ENCODE measurements at regions of chr1 and their contacts with region 1.

Region 1: DNA sequence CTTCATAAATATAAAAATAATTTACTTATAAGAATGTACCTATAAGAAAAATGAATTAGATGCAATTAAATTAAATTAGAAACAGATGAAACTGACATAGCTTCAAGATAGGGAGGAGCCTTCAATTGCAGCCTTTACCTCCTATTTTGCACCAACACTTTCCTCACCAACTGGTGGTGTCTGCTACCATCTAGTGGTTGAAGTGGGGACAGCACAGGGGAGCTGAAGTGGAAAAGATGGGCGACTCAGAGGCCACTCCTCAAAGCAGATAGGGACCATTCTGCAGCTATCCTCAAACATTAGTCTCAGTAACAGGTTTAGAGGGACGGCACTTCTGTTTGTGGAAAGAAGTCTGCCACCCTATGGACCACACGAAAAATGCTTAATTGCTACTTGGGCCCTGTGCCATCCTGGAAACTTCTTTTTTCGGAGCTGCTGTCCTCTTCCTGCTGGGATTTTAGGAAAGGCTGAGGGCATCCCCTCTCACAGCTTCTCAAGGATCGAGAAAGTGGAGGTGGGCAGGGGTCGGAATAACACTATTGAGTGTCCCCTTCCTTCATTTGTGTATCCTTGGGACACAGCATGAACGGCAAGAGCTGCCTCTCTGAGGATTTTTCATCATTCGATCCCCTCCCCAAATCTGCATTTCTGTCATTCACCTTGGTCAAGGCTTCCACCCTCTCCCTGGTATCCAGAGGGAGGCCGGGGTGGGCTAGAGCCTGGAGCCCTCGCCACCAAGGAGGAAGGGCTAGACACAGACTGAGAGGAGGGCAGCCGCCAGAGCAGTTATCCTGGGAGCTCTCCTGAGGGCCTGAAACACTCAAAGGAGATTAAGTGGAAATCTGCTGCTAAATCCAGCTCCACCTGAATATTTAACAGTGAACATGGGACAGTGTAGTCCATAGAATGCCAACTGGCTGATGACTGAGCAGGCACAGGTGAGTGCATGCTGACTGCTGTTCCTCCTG is 9.6 kb downstream of the PROK1 start:
- DNase-seq: peak; percentile 23
- H3K4me3 ChIP-seq: no peak overlapping the region
- H3K27me3 ChIP-seq: no peaks in the 10 kb centered on the region; the same call in 1 of the 2 replicates
- CTCF ChIP-seq: peak; percentile 92

Region 2: GRCh38 chr1:110209715-110210603 is 250.6 kb before region 1 on chr1 and contains the start of gene KCNC4:
- CTCF ChIA-PET with region 1: interaction called, 331 read pairs
- POLR2A ChIA-PET with region 1: no interaction called
- DNase-seq: peak; percentile 36
- H3K4me3 ChIP-seq: peak within 1 kb of the TSS; percentile 52
- H3K27me3 ChIP-seq: no peaks in the 10 kb centered on the region
- CTCF ChIP-seq: no peak
- polyA plus RNA-seq, gene KCNC4: 1.6 and 2.6 TPM in 2 replicates

Region 3: DNA sequence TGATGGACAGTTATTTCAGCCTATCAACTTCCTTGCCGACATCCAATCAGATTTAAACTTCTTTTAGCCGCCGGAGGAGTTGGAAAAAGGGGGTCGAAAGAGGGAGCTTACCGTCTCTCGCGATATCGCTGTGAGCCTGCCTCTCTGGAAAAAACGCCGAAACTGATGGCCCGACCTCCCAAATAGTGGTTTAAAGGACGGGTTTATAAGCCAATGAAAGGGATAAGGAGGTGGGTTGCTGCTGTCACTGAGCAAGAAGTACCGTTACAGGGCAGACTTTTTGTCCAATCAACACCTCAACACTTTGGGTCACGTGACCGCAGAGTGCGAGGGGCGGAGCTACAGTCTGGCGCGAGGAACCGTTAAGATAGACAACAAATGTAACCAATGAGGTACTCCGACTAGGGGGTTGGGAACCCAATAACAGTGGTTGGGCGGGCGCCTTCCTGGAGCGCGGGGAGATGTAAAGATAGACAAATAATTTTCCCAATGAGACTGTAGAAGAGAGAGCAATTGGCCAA is 121.6 kb before region 1 on chr1 and contains the start of gene RBM15:
- CTCF ChIA-PET with region 1: interaction called, 13 read pairs
- POLR2A ChIA-PET with region 1: no interaction called
- DNase-seq: peak; percentile 100
- H3K4me3 ChIP-seq: peak within 1 kb of the TSS; percentile 96
- H3K27me3 ChIP-seq: no peaks in the 10 kb centered on the region
- CTCF ChIP-seq: no peak
- polyA plus RNA-seq, gene RBM15: 9.7 and 10.2 TPM in 2 replicates

Region 4: DNA sequence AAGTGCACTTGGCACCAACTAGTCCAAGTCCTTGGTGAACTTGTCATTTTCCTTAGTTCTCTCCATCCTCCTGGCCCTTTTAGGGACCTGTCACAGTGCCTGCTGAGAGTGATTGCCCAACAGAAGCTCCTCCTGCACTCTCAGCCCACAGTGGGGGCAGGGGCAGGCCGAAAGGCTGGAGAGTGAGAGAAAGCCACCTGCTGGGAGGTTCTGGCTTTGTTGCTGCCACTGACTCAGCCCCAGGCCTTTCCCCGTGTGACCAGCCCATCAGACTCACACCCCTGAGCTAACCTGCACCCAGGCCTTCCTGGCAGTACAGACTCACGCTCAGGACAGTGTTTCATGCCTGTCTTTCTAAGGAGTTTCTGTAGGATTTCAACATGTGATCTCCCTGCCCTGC is 26.7 kb before region 1 on chr1:
- CTCF ChIA-PET with region 1: interaction called, 148 read pairs
- POLR2A ChIA-PET with region 1: no interaction called
- DNase-seq: no peak
- H3K4me3 ChIP-seq: no peak overlapping the region
- H3K27me3 ChIP-seq: peaks cover 7% of the 10 kb centered on the region
- CTCF ChIP-seq: peak; percentile 44

Region 5: GRCh38 chr1:110471163-110471562 is 10.6 kb after region 1 on chr1:
- CTCF ChIA-PET with region 1: interaction called, 11 read pairs
- POLR2A ChIA-PET with region 1: no interaction called
- DNase-seq: no peak
- H3K4me3 ChIP-seq: no peak overlapping the region
- H3K27me3 ChIP-seq: peaks cover 5% of the 10 kb centered on the region
- CTCF ChIP-seq: no peak

Measured in BJ (cell line).